ENCODE measurements at regions of chrX and their contacts with region 1.

Region 1: GRCh38 chrX:152343306-152343705 is 107.8 kb downstream of the GABRA3 start:
- DNase-seq: no peak
- H3K4me3 ChIP-seq: no peak overlapping the region
- H3K27ac ChIP-seq: no peak overlapping the region
- H3K4me1 ChIP-seq: no peaks in the 10 kb centered on the region
- H3K27me3 ChIP-seq: no peaks in the 10 kb centered on the region
- CTCF ChIP-seq: peak in 1 of 2 donors; percentile 41

Region 2: GRCh38 chrX:151852294-151852693 is 491.0 kb before region 1 on chrX:
- CTCF ChIA-PET with region 1: interaction called, 20 read pairs
- dilution Hi-C with region 1: no loop called
- in situ Hi-C with region 1: no loop called
- intact Hi-C with region 1: no loop called
- DNase-seq: no peak
- H3K4me3 ChIP-seq: no peak overlapping the region
- H3K27ac ChIP-seq: no peak overlapping the region
- H3K4me1 ChIP-seq: no peaks in the 10 kb centered on the region
- H3K27me3 ChIP-seq: no peaks in the 10 kb centered on the region
- CTCF ChIP-seq: no peak